ENCODE measurements at regions of chr11 and their contacts with region 1.

Region 1: DNA sequence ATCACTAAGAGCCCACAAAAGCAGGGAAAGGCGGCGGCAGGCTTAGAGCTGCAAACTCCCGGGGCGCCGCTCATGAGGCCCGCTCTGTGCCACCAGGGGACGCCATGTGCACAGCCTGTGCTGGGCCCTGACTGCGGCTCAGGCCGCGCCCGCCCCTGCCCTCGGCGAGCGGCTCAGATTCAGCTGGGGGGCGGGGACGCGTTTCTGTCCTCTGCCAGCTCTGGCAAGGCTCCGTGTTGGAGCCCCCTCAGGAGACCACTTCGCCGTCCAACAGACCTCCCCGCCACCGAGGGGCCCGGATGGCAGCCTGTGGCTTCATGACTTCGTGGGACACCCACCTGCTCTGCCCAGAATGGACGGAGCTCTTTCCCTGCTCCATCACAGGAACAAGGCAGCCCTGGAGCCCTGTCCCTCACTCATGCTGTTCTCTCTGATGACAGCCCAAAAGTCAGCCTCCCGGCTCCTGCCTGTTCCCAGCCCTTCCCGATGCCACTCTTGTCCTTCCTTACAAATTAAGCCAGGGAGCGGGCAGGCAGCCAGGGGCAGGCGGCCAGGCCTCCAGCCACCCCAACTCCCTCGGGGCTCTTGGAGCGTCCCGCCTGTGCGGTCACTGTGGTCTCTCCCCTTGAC is 69.1 kb downstream of the NAT10 start:
- DNase-seq: peak; percentile 90
- CTCF ChIP-seq: peak; percentile 99

Region 2: GRCh38 chr11:34044664-34045485 is 129.7 kb before region 1 on chr11:
- CTCF ChIA-PET with region 1: no interaction called
- POLR2A ChIA-PET with region 1: no interaction called
- DNase-seq: no peak
- CTCF ChIP-seq: no peak

Region 3: GRCh38 chr11:34134765-34135164 is 39.8 kb before region 1 on chr11:
- CTCF ChIA-PET with region 1: interaction called, 11 read pairs
- POLR2A ChIA-PET with region 1: no interaction called
- DNase-seq: no peak
- CTCF ChIP-seq: no peak

Region 4: GRCh38 chr11:34185926-34186841 is 11.7 kb after region 1 on chr11:
- CTCF ChIA-PET with region 1: interaction called, 57 read pairs
- POLR2A ChIA-PET with region 1: interaction called, 3 read pairs
- DNase-seq: no peak
- CTCF ChIP-seq: no peak

Region 5: DNA sequence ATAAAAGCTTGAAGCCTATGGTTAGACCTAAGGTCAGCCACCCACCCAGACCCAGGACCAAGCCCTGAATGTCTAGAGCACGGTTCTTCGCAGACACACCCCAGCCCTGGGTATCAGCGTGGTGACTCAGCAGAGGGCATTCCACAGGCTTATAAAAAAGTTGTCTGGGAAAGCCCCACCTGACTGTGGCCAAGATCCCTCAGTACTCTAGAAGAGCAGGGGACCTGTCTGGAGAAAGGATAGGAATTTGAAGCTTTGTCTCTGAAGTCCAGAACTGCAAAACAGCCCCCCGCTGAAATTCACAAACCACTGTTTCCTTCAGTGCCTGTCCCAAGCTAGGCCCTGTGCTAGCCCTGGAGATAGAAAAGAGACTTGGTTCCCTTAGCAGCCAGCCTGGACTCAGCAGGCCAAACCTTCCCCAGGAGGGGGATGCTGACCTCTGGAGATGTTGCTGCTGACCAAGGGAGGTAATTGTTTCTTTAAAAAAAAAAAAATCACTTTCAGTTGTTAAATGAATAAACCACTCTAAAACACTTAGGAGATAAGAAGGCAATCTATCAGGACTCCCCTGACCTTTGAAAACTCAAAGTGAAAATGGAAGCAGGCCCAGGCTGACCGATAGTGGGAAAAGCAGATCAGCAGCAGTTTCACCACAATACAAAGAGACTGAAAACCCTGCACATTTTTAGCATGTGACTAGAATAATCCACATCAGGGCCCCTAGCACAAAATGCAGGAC is 69.4 kb after region 1 on chr11:
- CTCF ChIA-PET with region 1: interaction called, 14 read pairs
- POLR2A ChIA-PET with region 1: no interaction called
- DNase-seq: peak; percentile 77
- CTCF ChIP-seq: no peak

Region 6: DNA sequence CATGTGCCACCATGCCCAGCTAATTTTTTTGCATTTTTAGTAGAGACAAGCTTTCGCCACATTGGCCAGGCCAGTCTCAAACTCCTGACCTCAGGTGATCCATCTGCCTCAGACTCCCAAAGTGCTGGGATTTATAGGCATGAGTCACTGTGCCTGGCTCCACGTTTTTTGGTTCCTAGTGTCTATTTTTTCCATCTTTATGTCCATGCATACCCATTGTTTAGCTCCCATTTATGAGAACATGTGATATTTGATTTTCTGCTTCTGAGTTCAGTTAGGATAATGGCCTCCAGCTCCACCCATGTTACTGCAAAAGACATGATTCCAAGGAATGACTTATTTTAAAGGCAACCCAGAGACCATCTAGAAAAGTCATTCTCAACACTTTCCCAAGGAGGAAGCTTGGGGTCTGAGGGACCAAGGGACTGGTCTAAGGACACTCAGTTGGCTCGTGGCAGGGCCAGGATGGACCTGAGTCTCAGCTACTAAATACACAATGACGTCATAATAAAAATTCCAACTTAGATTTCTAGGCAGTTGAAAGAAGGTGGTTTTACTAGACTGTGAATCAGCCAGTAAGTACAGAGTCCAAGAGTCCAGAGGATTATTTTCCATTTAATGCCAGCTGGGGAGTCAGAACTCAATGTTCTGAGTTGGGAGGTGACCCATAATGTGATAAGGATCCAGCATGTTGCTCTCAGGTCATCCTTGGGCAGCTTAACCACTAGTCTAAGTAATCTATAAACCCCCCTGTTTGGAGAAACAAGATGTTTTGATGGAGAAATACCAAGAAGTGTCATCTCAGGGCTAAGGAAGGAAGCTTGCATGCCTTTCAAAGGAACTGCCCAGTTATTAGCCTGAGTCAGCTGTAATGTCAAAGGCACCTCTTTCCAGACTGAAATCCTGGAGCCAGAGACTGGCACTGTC is 143.8 kb after region 1 on chr11:
- CTCF ChIA-PET with region 1: interaction called, 11 read pairs
- POLR2A ChIA-PET with region 1: no interaction called
- DNase-seq: no peak
- CTCF ChIP-seq: no peak

Region 7: GRCh38 chr11:34366522-34366921 is 192.0 kb after region 1 on chr11:
- CTCF ChIA-PET with region 1: interaction called, 51 read pairs
- POLR2A ChIA-PET with region 1: no interaction called
- DNase-seq: peak; percentile 44
- CTCF ChIP-seq: peak; percentile 44

Measured in GM10248 (cell line).